ENCODE measurements at regions of chr7 and their contacts with region 1.

Region 1: DNA sequence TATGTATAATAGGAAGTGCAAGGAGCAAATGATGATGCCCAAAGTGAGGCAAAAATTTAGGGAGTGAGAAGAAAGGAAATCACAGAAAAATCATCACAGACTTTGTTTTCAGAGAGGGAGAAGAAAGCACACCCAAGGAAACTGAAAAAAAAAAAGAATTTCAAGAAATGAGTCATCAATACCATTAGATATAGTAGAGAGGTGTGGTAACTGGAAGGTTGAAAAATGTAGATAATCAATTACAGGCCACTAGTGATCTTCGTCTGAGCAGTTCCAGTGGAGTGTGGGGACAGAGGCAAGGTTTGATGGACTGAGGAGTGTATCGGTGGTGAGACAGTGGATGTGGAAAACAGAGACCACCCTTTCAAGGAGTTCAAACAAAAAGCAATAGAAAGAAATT is 31.7 kb downstream of the ASB4 start:
- DNase-seq: no peak
- H3K4me3 ChIP-seq: no peak overlapping the region
- H3K27ac ChIP-seq: no peak overlapping the region
- H3K4me1 ChIP-seq: no peaks in the 10 kb centered on the region
- H3K27me3 ChIP-seq: no peaks in the 10 kb centered on the region
- CTCF ChIP-seq: no peak
- EP300 ChIP-seq: no peak
- POLR2A ChIP-seq: no peak

Region 2: DNA sequence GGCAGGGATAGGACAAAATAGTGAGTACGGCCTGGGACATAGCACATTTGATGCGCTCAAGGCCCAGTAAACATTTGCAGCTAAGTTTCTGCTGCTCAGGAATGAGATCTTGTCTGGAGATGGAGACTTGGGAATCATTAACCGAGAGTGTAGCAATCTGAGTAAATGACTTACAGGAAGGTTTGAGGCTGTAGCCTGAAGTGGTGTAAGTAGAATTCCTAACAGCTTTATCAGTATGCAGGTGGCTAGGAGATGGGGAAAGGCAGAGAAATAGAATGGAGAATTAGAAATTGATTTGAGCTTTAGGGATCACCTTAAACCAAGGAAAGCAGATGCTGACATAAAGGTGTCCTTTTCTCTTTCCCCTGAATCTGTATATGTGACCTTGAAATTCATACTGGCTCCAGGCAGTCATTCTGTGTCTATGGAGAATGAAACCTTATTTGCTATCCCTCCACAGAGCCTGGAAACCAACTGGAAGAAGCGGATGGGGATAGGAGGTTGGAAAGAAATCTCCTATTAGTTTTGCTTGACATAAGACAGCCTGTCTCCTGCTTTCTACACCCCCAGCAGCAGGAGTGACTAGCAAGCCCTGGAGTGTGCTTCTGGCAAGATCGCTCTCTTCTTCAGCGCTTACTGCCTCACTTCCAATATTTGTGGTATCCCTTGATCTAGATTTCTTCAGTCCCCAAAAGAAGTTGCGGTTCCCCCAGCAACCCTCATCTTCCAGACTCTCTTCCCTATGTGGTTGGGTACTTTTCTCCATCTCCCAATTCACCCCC is 76.2 kb before region 1 on chr7:
- in situ Hi-C with region 1: no loop called
- intact Hi-C with region 1: no loop called
- DNase-seq: no peak
- H3K4me3 ChIP-seq: no peak overlapping the region
- H3K27ac ChIP-seq: peak overlapping the region in 1 of 4 donors; percentile 10
- H3K4me1 ChIP-seq: no peaks in the 10 kb centered on the region
- H3K27me3 ChIP-seq: no peaks in the 10 kb centered on the region
- CTCF ChIP-seq: no peak
- EP300 ChIP-seq: no peak
- POLR2A ChIP-seq: no peak

Region 3: GRCh38 chr7:96781919-96782318 is 1264.5 kb after region 1 on chr7:
- in situ Hi-C with region 1: no loop called
- intact Hi-C with region 1: loop called (anchors 5 kb)
- DNase-seq: no peak
- H3K4me3 ChIP-seq: no peak overlapping the region
- H3K27ac ChIP-seq: no peak overlapping the region
- H3K4me1 ChIP-seq: no peaks in the 10 kb centered on the region
- H3K27me3 ChIP-seq: no peaks in the 10 kb centered on the region
- CTCF ChIP-seq: no peak
- EP300 ChIP-seq: no peak
- POLR2A ChIP-seq: no peak

Measured in transverse colon (tissue), 4 donors.